Lower leg skin (tissue), 4 donors: ENCODE measurements at regions of chr5 and their contacts with region 1.

Region 1: DNA sequence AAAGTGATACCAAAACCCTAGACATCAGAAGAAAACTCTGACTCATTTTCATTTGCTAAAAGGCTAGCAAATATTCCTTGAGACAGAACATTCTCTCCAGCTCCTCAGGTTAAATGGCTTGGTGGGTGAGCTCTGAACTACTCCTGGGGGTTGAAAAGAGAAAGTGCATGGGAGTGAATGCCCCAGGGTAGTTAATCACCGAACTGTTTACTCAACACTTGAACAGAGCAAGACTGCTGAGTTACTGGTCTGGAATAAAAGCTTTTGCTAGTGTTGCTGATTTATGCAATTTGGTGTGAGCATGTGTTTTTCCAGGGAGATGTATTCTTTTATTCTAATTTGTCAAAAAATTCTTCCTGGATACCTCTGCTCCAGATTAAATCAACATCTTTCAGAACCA is 88.3 kb upstream of the PRDM9 start:
- DNase-seq: no peak
- H3K4me3 ChIP-seq: no peak overlapping the region
- CTCF ChIP-seq: no peak
- POLR2A ChIP-seq: no peak

Region 2: DNA sequence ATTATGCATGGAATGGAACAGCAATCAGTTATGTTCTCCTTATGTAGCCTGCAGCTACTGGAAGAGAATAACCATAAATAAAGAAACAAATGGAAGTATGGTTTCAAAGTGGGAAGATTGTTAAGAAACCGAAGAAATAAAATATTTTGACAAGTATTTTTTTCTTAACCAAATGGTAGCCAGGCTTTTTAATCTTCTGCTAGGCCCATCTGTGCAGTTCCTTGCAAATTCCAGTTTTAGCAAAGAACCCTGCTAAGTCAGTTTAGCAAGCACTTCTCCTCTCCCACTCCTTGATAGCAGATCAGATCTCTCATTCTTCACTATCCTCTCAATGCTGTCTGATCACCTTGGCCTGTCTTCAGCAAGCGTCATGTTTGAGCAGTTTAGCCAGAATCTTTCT is 22.8 kb before region 1 on chr5:
- intact Hi-C with region 1: loop called (anchors 1 kb)
- DNase-seq: no peak
- H3K4me3 ChIP-seq: no peak overlapping the region
- CTCF ChIP-seq: no peak
- POLR2A ChIP-seq: no peak

Region 3: GRCh38 chr5:23451156-23451555 is 32.0 kb after region 1 on chr5:
- intact Hi-C with region 1: loop called (anchors 1 kb)
- DNase-seq: no peak
- H3K4me3 ChIP-seq: no peak overlapping the region
- CTCF ChIP-seq: no peak
- POLR2A ChIP-seq: no peak

Region 4: GRCh38 chr5:23742701-23743100 is 323.6 kb after region 1 on chr5:
- intact Hi-C with region 1: no loop called
- DNase-seq: no peak
- H3K4me3 ChIP-seq: no peak overlapping the region
- CTCF ChIP-seq: no peak
- POLR2A ChIP-seq: no peak

Region 5: GRCh38 chr5:24118351-24118750 is 699.2 kb after region 1 on chr5:
- intact Hi-C with region 1: loop called (anchors 10 kb)
- DNase-seq: no peak
- H3K4me3 ChIP-seq: no peak overlapping the region
- CTCF ChIP-seq: no peak
- POLR2A ChIP-seq: no peak

Region 6: DNA sequence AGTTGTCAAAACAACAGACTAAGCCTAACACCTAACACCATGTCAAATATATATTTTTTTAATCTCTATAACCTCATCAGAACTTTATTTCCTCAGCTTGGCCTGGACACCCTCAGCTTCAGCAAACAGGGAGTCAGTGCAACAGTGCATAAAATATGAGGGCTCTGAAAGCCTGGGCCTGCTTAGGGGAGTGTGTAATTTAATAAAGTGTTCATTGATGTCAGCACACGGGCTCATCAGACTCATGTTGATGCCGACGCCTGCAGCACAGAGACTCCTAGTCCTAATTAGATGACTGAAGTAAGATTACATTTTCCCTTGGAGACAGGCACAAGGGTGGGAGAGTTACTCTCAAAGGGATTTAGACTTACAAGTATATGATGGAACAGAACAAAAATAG is 1187.9 kb after region 1 on chr5:
- intact Hi-C with region 1: no loop called
- DNase-seq: no peak
- H3K4me3 ChIP-seq: no peak overlapping the region
- CTCF ChIP-seq: no peak
- POLR2A ChIP-seq: no peak